Activated CD8-positive, alpha-beta T cell treated with anti-CD3 and anti-CD28 coated beads, Interleukin-2, amount 10 ng/mL, durations not matched to agents 7 days and 5 days (primary cell): ENCODE measurements at regions of chr16 and their contacts with region 1.

Region 1: DNA sequence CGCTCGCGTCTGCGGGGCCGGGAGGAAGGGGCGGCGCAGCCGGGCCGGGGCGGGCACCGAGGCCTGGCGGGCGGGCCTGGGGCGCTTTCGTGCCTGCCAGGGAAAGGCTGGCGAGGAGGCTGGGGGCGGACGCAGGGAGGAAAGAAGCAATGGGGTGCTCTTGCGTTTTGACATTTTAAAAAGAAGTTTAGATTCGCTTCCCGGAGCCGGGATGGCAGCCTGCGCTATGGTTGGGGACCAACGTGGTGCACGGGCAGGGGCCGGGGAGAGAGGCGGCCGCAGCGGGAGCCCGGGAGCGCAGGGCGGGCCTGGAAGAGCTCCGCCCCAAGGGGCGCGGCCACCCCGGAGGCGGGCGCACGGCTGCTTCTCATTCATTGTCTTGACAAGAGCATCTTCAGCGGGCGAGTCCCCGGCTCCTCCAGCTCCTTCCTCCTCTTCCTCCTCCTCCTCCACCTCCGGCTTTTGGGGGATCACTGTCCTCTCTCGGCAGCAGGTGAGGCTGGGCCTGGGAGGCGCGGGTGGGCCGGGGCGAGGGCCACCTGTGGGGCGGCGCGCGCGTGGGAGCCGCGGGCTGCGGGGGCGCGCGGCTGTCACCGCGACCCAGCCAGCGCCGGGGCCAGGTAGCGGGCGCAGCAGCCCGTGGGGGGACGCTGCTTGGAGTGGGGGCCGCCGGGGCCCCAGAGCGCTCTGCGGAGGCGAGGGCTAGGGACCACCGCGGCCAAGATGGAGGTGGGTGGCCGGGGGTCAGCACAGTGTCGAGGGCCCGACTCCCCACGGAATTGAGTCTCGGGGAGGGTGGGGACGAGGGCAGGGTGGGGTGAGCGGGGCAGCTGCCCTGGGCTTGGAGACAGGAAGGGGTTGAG is at the start of gene CORO1A:
- DNase-seq: peak; percentile 92
- ATAC-seq: peak; percentile 51
- H3K4me3 Mint-ChIP-seq: peak within 1 kb of the TSS; percentile 98
- H3K27ac Mint-ChIP-seq: peak within 1 kb of the TSS; percentile 99
- H3K4me1 Mint-ChIP-seq: peaks cover 30% of the 10 kb centered on the region
- H3K27me3 Mint-ChIP-seq: no peaks in the 10 kb centered on the region
- total RNA-seq, gene CORO1A: 1,875 to 1,983 TPM

Region 2: DNA sequence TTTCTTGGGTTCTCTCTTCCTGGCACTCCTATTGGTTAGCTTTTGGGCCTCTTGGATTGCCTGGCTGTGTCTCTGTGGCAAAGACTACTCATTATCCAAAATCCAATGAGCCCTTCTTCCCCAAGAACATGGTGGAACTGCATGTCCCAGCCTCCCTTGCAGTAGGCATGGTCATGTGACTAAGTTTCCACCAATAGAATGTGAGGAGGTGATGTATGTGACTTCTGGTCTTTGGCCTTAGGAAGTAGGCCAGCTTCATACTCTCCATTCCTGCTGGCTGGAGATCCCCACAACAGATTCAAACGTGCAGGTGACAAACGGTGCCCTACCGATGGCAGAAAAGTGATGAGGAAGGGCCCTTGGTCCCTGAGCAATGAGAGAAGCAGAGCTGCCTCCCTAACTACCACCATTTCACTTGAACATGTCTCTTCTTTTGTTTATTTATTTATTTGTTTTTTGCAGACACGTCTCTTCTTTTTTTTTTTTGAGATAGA is 537.7 kb before region 1 on chr16:
- CTCF ChIA-PET with region 1: no interaction called
- POLR2A ChIA-PET with region 1: no interaction called
- DNase-seq: no peak
- ATAC-seq: no peak
- H3K4me3 Mint-ChIP-seq: no peak overlapping the region
- H3K27ac Mint-ChIP-seq: peak overlapping the region; percentile 74
- H3K4me1 Mint-ChIP-seq: peaks cover 59% of the 10 kb centered on the region
- H3K27me3 Mint-ChIP-seq: no peaks in the 10 kb centered on the region

Region 3: DNA sequence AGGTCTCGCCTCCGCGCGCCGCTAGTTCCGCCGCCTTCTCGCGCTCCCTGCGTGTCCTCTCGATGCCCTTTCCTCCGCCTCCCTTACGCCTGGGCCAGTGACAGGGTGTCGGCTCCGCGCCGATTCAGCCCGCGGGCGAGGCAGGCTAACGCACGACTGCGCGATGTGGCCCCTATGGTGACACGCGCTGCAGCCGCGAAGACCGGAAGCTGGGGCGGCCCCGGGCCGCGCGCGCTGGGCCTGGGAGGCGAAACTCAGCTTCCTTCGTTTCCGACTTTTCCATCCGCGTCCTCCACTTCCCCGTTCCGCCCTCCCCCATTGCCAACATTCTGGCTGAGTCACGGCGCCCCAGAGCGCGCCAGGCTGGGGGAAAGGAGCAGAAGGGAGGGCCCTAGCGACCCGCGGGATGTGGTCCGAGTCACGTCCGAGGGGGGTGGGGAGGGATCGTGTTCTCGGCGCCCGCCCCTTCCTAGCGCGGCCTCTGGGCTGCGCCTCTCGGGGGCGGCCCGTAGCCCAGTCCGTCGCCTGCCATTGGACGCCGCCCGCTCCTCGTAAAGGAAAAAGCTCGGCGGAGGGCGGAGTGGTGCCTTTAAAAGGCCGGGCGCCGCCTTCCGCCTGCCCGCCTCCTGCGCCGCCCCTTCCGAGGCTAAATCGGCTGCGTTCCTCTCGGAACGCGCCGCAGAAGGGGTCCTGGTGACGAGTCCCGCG is 118.2 kb before region 1 on chr16 and contains the start of gene ALDOA:
- CTCF ChIA-PET with region 1: interaction called, 7 read pairs
- POLR2A ChIA-PET with region 1: interaction called, 34 read pairs
- DNase-seq: peak; percentile 98
- ATAC-seq: peak; percentile 88
- H3K4me3 Mint-ChIP-seq: peak within 1 kb of the TSS; percentile 99
- H3K27ac Mint-ChIP-seq: peak within 1 kb of the TSS; percentile 98
- H3K4me1 Mint-ChIP-seq: peaks cover 44% of the 10 kb centered on the region
- H3K27me3 Mint-ChIP-seq: no peaks in the 10 kb centered on the region
- total RNA-seq, gene ALDOA: 1,738 to 1,843 TPM

Region 4: GRCh38 chr16:30112197-30113030 is 71.0 kb before region 1 on chr16:
- CTCF ChIA-PET with region 1: interaction called, 10 read pairs
- POLR2A ChIA-PET with region 1: interaction called, 23 read pairs
- DNase-seq: peak; percentile 67
- ATAC-seq: peak; percentile 78
- H3K4me3 Mint-ChIP-seq: no peak overlapping the region
- H3K27ac Mint-ChIP-seq: peak overlapping the region; percentile 60
- H3K4me1 Mint-ChIP-seq: peaks cover 21% of the 10 kb centered on the region
- H3K27me3 Mint-ChIP-seq: no peaks in the 10 kb centered on the region

Region 5: DNA sequence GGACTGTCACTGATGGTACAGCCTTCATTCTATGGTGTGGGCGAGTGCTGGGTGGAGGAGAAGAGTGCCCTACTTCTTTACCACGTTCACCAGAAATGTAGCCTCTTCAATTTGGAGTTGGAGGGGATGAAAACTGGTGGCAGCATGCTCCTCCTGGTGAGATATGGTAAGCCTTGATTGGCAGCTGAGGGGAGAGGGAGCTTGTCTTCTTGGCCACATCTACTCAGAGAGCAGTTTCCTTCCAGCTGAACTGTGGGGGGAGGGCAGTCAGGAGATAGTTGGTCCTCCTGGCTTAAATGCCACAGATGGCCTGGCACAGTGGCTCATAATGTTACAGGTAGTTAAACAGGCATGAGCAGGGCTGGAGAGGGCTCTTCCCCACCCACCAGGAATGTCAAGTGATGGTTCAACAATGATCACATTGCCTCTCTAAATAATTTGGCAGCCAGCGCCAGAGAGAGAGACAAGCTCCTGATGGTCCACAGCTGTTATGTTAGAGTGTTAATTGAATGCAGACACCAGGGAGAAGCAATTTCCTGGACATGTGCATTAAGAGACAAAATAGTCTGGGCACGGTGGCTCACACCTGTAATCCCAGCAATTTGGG is 51.5 kb before region 1 on chr16:
- CTCF ChIA-PET with region 1: interaction called, 4 read pairs
- POLR2A ChIA-PET with region 1: interaction called, 10 read pairs
- DNase-seq: no peak
- ATAC-seq: no peak
- H3K4me3 Mint-ChIP-seq: no peak overlapping the region
- H3K27ac Mint-ChIP-seq: peak overlapping the region; percentile 43
- H3K4me1 Mint-ChIP-seq: peaks cover 13% of the 10 kb centered on the region
- H3K27me3 Mint-ChIP-seq: no peaks in the 10 kb centered on the region

Region 6: DNA sequence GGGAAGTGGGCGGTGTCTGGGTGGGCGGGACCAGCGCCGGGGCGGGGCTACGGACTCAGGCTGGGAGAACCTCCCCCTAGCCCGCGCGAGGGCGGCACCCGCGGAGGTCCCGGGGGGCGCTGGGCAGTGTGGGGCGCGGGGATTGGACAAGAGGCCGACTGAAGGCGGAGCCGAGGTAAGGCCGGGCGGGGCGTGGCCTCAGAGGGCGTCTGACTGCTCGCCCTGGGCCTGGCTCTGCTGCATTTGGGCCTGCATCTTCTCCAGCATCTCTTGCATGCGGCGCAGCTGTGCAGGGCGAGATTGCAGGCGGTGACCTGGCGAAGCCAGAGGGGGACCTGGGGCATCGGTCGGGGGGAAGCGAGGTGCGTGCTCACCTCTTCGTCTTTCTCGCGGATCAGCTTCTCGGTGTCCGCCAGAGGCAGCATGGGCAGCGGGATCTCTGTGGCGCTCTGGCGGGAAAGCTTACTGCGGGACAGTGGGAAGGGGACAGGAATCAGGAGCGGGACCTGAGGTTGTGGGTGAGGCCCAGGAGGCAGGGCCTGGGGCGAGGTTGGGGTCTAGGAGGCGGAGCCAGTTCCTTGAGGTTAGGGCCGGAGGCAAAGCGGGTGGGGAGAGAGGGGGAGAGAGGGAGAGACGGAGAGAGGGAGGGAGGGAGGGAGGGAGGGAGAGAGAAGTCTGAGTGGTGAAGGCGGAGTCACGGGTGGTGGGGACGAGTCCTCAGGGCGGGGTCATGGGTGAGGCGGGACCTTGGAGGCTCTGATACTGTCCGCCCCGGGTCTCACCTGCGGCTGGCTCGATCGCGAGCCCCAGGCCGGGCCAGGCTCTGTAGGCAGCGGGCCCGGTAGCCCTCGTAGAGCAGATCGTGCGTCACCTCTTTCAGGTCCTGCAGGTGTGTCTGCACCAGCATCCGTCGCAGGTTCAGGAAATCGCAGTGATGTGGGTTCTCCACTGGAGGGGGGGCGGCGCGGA is 195.1 kb after region 1 on chr16:
- CTCF ChIA-PET with region 1: no interaction called
- POLR2A ChIA-PET with region 1: interaction called, 11 read pairs
- DNase-seq: peak; percentile 99
- ATAC-seq: peak; percentile 88
- H3K4me3 Mint-ChIP-seq: peak overlapping the region; percentile 99
- H3K27ac Mint-ChIP-seq: peak overlapping the region; percentile 100
- H3K4me1 Mint-ChIP-seq: peaks cover 65% of the 10 kb centered on the region
- H3K27me3 Mint-ChIP-seq: no peaks in the 10 kb centered on the region